WTC11 (cell line): ENCODE measurements at regions of chr11 and their contacts with region 1.

Region 1: GRCh38 chr11:64864473-64865285 is 13.7 kb downstream of the EHD1 start:
- DNase-seq: no peak
- ATAC-seq: peak; percentile 18; the same call in 1 of the 2 replicates
- H3K4me3 Mint-ChIP-seq: no peak overlapping the region
- H3K27ac Mint-ChIP-seq: no peak overlapping the region
- H3K4me1 Mint-ChIP-seq: peaks cover 17% of the 10 kb centered on the region
- H3K27me3 Mint-ChIP-seq: no peaks in the 10 kb centered on the region
- CTCF ChIP-seq: no peak

Region 2: DNA sequence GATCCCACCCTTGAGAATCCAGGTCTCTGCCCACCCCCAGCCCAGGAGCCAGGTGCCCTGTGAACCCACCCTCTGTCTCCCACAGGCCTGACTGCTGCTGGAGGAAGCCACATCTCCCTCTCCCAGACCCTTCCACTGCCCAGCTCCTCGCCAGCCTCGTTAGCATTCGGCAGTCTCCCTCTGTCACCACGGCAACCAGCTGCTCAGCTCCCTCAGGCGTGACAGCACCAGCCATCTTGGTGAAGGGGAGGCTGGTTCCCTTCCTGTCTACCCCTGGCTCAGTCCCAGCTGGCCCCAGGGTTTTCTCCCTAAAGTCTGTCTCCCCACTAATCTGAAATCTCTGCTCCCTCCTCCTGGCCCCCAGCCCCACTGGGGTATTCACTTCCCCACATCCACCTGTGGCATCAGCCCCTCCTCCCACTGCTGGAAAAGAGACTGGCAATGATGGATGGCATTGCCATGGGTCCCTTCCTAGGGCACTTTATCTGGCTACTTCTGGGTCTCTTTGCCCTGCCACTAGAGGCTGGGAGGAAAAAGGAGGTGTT is 169.8 kb before region 1 on chr11:
- CTCF ChIA-PET with region 1: no interaction called
- POLR2A ChIA-PET with region 1: no interaction called
- DNase-seq: no peak
- ATAC-seq: peak; percentile 65
- H3K4me3 Mint-ChIP-seq: no peak overlapping the region
- H3K27ac Mint-ChIP-seq: no peak overlapping the region
- H3K4me1 Mint-ChIP-seq: peaks cover 21% of the 10 kb centered on the region
- H3K27me3 Mint-ChIP-seq: peaks cover 49% of the 10 kb centered on the region
- CTCF ChIP-seq: no peak

Region 3: DNA sequence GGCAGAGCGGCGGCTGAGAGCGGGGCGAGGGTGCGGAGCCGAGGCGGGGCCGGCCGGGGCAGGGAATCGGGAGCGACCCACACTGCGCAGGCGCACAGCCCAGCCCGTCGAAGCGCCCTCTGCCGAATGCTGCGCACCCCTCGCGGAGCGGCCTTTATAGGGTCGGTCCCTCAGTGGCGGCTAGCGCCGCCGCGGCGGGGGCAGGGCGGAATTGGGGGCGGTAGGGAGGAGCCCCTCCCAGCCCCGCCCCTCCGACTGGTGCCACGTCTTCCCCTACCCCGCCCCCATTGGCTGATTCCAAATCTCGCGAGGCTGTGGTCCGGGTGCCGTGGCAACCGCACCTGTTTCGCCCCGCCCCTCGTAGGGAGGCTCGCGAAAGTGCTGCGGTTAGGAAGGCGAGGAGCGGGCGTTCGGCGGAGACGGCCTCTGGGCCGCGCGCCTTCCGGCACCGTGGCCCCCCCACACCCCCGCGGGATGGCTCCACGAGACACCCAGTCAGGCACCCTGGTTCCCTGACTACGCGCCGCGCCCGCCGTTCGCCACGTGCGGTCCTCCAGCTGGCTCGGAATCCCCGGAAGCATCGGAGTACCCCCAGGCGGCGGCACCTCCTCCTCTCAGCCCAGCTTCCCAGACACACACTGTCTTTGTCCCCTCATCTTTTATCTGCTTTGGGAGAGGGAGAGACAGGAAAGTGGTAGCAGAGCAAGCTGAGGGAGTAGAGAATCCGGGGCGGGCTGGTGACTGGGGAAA is 14.0 kb after region 1 on chr11 and contains the start of gene EHD1:
- CTCF ChIA-PET with region 1: interaction called, 16 read pairs
- POLR2A ChIA-PET with region 1: interaction called, 3 read pairs
- DNase-seq: peak; percentile 99
- ATAC-seq: peak; percentile 89
- H3K4me3 Mint-ChIP-seq: peak within 1 kb of the TSS; percentile 98
- H3K27ac Mint-ChIP-seq: peak within 1 kb of the TSS; percentile 92
- H3K4me1 Mint-ChIP-seq: peaks cover 20% of the 10 kb centered on the region
- H3K27me3 Mint-ChIP-seq: peaks cover 7% of the 10 kb centered on the region
- CTCF ChIP-seq: no peak
- total RNA-seq, gene EHD1: 29.9 to 38.1 TPM (median 35.2 TPM) in 3 replicates

Region 4: DNA sequence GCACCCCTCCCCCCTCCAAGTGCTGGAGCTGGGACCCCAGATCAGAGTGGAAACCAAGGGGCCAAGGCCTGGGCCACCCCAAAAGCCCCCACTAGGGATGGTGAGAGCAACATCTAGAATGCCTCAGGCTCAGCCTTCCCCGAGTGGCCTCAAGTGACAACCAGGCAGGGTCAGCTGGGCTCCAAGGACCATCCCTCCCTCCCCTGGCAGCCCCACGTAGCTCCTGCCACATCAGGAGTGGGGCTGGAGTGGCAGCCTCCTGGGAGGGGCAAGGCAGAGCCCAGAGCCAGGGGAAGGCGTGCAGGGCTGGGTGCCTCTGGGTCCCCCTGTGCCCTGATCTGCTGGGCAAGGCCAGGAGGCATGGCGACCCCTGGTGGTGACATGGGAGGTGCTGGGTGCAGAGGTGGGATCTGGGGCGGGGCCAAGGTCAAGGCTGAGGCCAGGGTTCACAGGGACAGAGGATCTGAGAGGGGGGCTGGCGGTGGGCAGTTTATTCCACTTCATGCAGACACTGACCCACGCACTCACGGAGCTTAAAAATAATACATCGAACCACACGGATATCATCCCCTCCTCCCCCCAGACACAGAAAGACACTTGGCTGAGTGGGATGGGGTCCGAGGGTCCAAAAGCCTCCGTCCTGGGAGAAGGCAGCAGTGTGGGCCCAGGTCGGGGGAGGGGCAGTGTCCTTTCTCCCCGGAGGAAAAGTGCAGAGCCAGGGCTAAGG is 29.6 kb after region 1 on chr11:
- CTCF ChIA-PET with region 1: interaction called, 60 read pairs
- POLR2A ChIA-PET with region 1: no interaction called
- DNase-seq: peak; percentile 95
- ATAC-seq: peak; percentile 95
- H3K4me3 Mint-ChIP-seq: no peak overlapping the region
- H3K27ac Mint-ChIP-seq: no peak overlapping the region
- H3K4me1 Mint-ChIP-seq: peaks cover 2% of the 10 kb centered on the region; the same call in 1 of the 2 replicates
- H3K27me3 Mint-ChIP-seq: no peaks in the 10 kb centered on the region
- CTCF ChIP-seq: peak; percentile 87

Region 5: GRCh38 chr11:64996710-64997380 is 132.2 kb after region 1 on chr11 and contains the start of gene BATF2:
- CTCF ChIA-PET with region 1: interaction called, 11 read pairs
- POLR2A ChIA-PET with region 1: no interaction called
- DNase-seq: peak; percentile 76
- ATAC-seq: peak; percentile 97
- H3K4me3 Mint-ChIP-seq: peak within 1 kb of the TSS; percentile 56
- H3K27ac Mint-ChIP-seq: peak within 1 kb of the TSS; percentile 78
- H3K4me1 Mint-ChIP-seq: peaks cover 18% of the 10 kb centered on the region
- H3K27me3 Mint-ChIP-seq: no peaks in the 10 kb centered on the region
- CTCF ChIP-seq: no peak
- total RNA-seq, gene BATF2: 1.3 to 3.2 TPM (median 2.2 TPM) in 3 replicates